Activated CD8-positive, alpha-beta T cell treated with anti-CD3 and anti-CD28 coated beads, Interleukin-2, amount 10 ng/mL, durations not matched to agents 7 days and 5 days (primary cell): ENCODE measurements at regions of chr22 and their contacts with region 1.

Region 1: GRCh38 chr22:46239261-46240048 is 10.6 kb downstream of the CDPF1 start:
- DNase-seq: peak; percentile 57
- ATAC-seq: peak; percentile 68
- H3K4me3 Mint-ChIP-seq: peak overlapping the region; percentile 7
- H3K27ac Mint-ChIP-seq: peak overlapping the region; percentile 84
- H3K4me1 Mint-ChIP-seq: peaks cover 32% of the 10 kb centered on the region
- H3K27me3 Mint-ChIP-seq: no peaks in the 10 kb centered on the region

Region 2: GRCh38 chr22:46250035-46250782 is 10.8 kb after region 1 on chr22 and contains the start of gene CDPF1:
- CTCF ChIA-PET with region 1: interaction called, 11 read pairs
- POLR2A ChIA-PET with region 1: interaction called, 3 read pairs
- DNase-seq: peak; percentile 90
- ATAC-seq: peak; percentile 96
- H3K4me3 Mint-ChIP-seq: peak within 1 kb of the TSS; percentile 77
- H3K27ac Mint-ChIP-seq: peak within 1 kb of the TSS; percentile 84
- H3K4me1 Mint-ChIP-seq: peaks cover 35% of the 10 kb centered on the region
- H3K27me3 Mint-ChIP-seq: no peaks in the 10 kb centered on the region
- total RNA-seq, gene CDPF1: 11.6 to 11.7 TPM